Activated naive CD4-positive, alpha-beta T cell treated with anti-CD3 and anti-CD28 coated beads for 36 hours (primary cell): ENCODE measurements at regions of chr9 and their contacts with region 1.

Region 1: DNA sequence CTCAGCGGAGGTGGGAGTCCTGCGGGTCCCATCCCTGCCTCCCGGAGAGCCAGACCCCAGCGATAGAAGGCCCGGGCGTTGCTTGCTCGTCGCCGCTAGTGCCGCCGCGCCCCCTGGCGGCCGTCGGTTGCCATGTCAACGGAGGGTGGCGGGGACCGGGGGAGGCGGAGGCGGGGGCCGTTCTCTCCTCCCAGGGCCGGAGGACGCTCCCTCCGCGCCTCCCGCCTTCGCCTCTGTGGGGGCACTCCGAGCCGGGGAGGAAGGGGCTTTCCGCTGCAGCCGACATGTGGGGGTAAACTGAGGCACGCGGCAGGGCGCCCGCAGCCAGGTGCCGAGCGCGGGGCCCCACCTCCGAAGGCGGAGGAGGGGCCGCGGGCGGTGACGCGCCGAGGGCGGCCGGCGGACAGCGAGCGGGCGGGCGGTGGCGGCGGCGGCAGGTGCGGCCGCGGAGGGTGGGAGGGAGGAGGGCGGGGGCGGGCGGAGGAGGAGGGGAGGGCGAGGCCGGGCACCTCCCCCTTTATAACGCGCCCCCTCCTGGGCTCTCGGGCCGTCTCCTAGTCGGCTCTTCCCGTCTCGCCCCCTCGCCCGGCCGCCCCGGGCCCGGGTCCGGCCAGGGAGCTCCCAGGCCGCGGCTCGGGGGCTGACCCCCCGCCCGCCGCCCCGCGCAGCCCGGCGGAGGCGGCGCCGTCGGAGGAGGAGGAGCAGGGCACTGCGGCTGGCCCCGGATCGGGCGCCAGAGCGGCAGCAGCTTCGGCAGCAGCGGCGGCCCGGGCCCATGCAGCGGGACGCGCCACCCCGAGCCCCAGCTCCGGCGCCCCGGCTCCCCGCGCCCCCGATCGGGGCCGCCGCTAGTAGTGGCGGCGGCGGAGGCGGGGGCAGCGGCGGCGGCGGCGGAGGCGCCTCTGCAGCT is 556 bp upstream of the CDK9 start:
- DNase-seq: peak; percentile 91
- H3K4me3 Mint-ChIP-seq: peak overlapping the region; percentile 95
- H3K27ac Mint-ChIP-seq: peak overlapping the region; percentile 91
- H3K4me1 Mint-ChIP-seq: peaks cover 68% of the 10 kb centered on the region
- H3K27me3 Mint-ChIP-seq: no peaks in the 10 kb centered on the region

Region 2: DNA sequence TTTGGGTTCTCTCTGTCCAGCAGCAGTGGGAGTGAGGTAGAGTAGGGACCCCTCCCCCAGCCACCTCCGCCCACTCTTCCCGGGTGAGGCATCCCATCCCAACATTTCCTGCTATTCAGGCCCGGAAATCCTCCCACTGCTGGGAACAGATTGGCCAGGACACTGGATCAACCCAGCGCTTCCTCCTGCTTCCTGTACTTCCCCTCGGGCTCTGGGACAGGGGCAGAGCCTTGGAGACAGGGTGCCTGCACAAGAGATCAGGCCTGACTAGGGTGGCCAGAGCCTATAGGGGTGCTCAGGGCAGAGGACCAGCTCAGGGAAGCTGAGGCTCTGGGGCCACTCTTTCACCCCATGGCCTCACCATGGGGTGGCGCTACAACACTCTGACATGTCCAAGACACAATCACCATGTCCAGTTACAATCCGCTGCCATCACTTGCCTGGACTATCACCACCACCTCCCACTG is 21.3 kb before region 1 on chr9:
- CTCF ChIA-PET with region 1: interaction called, 18 read pairs
- intact Hi-C with region 1: no loop called
- DNase-seq: peak; percentile 53
- H3K4me3 Mint-ChIP-seq: no peak overlapping the region
- H3K27ac Mint-ChIP-seq: peak overlapping the region; percentile 28
- H3K4me1 Mint-ChIP-seq: peaks cover 44% of the 10 kb centered on the region
- H3K27me3 Mint-ChIP-seq: no peaks in the 10 kb centered on the region

Region 3: DNA sequence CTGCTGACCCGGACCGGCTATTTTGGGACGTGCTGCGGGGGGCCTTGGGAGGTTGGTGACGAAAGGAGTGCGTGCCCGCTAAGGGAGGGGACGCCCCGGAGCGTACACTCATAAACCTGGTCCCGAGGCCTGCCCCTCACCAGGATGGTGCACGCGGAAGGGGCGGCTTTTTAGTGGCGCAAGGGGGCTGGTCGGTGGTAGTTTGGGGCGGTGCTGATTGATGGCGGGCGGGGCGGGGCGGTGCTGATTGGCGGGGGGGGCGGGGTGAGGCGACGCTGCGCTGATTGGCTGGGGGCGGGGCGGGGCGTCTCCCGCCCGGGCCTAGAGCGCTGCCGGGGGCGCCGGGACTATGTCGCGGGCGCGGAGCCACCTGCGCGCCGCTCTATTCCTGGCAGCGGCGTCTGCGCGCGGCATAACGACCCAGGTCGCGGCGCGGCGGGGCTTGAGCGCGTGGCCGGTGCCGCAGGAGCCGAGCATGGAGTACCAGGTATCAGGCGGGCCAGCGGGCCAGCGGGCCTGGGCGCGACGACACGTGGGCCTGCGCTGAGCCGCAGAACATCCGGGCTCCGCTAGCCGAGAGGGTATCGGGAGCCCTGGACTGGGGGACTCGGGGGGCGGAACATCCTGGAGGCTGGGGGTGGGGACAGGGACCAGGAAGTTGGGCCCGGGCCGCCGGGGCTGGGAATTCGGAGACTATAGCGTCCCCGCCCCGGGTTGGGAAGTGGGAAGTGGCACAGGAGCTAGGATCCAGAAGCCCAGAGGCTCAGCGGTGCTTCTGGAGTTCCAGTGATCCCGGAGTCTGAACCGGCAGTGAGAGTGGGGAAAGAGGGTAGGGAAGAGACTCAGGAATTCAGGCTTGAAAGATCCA is 17.5 kb after region 1 on chr9 and contains the start of gene FPGS:
- CTCF ChIA-PET with region 1: interaction called, 5 read pairs
- intact Hi-C with region 1: loop called (anchors 1 kb)
- DNase-seq: peak; percentile 92
- H3K4me3 Mint-ChIP-seq: peak within 1 kb of the TSS; percentile 96
- H3K27ac Mint-ChIP-seq: peak within 1 kb of the TSS; percentile 84
- H3K4me1 Mint-ChIP-seq: peaks cover 29% of the 10 kb centered on the region
- H3K27me3 Mint-ChIP-seq: no peaks in the 10 kb centered on the region
- total RNA-seq, gene FPGS: 67.8 to 73.0 TPM

Region 4: GRCh38 chr9:128552153-128552743 is 767.0 kb after region 1 on chr9 and contains the start of gene SPTAN1:
- CTCF ChIA-PET with region 1: no interaction called
- intact Hi-C with region 1: no loop called
- DNase-seq: peak; percentile 97
- H3K4me3 Mint-ChIP-seq: peak within 1 kb of the TSS; percentile 85
- H3K27ac Mint-ChIP-seq: peak within 1 kb of the TSS; percentile 84
- H3K4me1 Mint-ChIP-seq: peaks cover 42% of the 10 kb centered on the region
- H3K27me3 Mint-ChIP-seq: no peaks in the 10 kb centered on the region
- total RNA-seq, gene SPTAN1: 162 to 183 TPM